OCI-LY7 (cell line): ENCODE measurements at regions of chrX and their contacts with region 1.

Region 1: GRCh38 chrX:41180194-41180908 is 95.1 kb downstream of the USP9X start:
- DNase-seq: peak; percentile 62
- H3K4me3 ChIP-seq: no peak overlapping the region
- H3K27ac ChIP-seq: no peak overlapping the region
- H3K4me1 ChIP-seq: peaks cover 28% of the 10 kb centered on the region
- CTCF ChIP-seq: peak; percentile 80

Region 2: GRCh38 chrX:41167888-41168287 is 12.5 kb before region 1 on chrX:
- CTCF ChIA-PET with region 1: interaction called, 6 read pairs
- POLR2A ChIA-PET with region 1: interaction called, 12 read pairs
- intact Hi-C with region 1: no loop called
- DNase-seq: no peak
- H3K4me3 ChIP-seq: no peak overlapping the region
- H3K27ac ChIP-seq: no peak overlapping the region
- H3K4me1 ChIP-seq: no peaks in the 10 kb centered on the region
- CTCF ChIP-seq: no peak

Region 3: DNA sequence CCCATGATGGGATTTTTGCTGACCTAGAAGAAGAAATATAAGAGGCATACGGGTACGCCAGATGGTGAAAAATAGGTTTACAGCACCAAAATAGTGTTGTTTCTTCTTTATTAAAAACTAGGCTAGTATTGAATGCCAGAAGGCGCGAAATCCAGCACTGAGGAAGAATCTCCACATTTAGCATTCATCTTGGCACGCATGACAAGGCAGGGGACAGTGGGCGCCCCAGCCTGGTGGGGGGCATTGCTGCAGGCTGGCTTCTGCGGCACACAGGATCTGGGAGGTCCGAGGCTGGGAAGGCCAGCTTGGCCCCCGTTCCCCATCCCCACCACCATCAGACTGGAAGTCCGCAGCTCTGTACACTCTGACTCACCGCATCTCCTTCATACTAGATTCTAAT is 77.9 kb after region 1 on chrX:
- CTCF ChIA-PET with region 1: no interaction called
- POLR2A ChIA-PET with region 1: interaction called, 4 read pairs
- intact Hi-C with region 1: loop called (anchors 2 kb)
- DNase-seq: no peak
- H3K4me3 ChIP-seq: no peak overlapping the region
- H3K27ac ChIP-seq: no peak overlapping the region
- H3K4me1 ChIP-seq: peaks cover 4% of the 10 kb centered on the region
- CTCF ChIP-seq: no peak

Region 4: GRCh38 chrX:41621211-41621651 is 440.9 kb after region 1 on chrX:
- CTCF ChIA-PET with region 1: no interaction called
- POLR2A ChIA-PET with region 1: no interaction called
- intact Hi-C with region 1: no loop called
- DNase-seq: no peak
- H3K4me3 ChIP-seq: no peak overlapping the region
- H3K27ac ChIP-seq: no peak overlapping the region
- H3K4me1 ChIP-seq: peaks cover 11% of the 10 kb centered on the region
- CTCF ChIP-seq: no peak